Activated CD4-positive, alpha-beta T cell treated with anti-CD3 and anti-CD28 coated beads for 36 hours (primary cell): ENCODE measurements at regions of chr18 and their contacts with region 1.

Region 1: GRCh38 chr18:32018331-32019250 is at the start of gene RNF125:
- DNase-seq: peak; percentile 93
- ATAC-seq: peak; percentile 76
- H3K4me3 Mint-ChIP-seq: peak within 1 kb of the TSS; percentile 90
- H3K27ac Mint-ChIP-seq: peak within 1 kb of the TSS; percentile 94
- H3K4me1 Mint-ChIP-seq: peaks cover 42% of the 10 kb centered on the region
- H3K27me3 Mint-ChIP-seq: no peaks in the 10 kb centered on the region
- total RNA-seq, gene RNF125: 21.6 to 22.2 TPM

Region 2: GRCh38 chr18:31685097-31686082 is 333.2 kb before region 1 on chr18:
- CTCF ChIA-PET with region 1: no interaction called
- POLR2A ChIA-PET with region 1: no interaction called
- intact Hi-C with region 1: loop called in 1 of 2 experiments (anchors 5 kb)
- DNase-seq: peak; percentile 74
- ATAC-seq: peak; percentile 80
- H3K4me3 Mint-ChIP-seq: peak overlapping the region; percentile 73
- H3K27ac Mint-ChIP-seq: peak overlapping the region; percentile 78
- H3K4me1 Mint-ChIP-seq: peaks cover 16% of the 10 kb centered on the region
- H3K27me3 Mint-ChIP-seq: peaks cover 39% of the 10 kb centered on the region

Region 3: GRCh38 chr18:31850844-31851243 is 167.7 kb before region 1 on chr18:
- CTCF ChIA-PET with region 1: no interaction called
- POLR2A ChIA-PET with region 1: no interaction called
- intact Hi-C with region 1: no loop called
- DNase-seq: no peak
- ATAC-seq: no peak
- H3K4me3 Mint-ChIP-seq: no peak overlapping the region
- H3K27ac Mint-ChIP-seq: no peak overlapping the region
- H3K4me1 Mint-ChIP-seq: no peaks in the 10 kb centered on the region
- H3K27me3 Mint-ChIP-seq: no peaks in the 10 kb centered on the region

Region 4: GRCh38 chr18:31954349-31954748 is 64.2 kb before region 1 on chr18:
- CTCF ChIA-PET with region 1: no interaction called
- POLR2A ChIA-PET with region 1: no interaction called
- intact Hi-C with region 1: loop called in 1 of 2 experiments (anchors 5 kb)
- DNase-seq: no peak
- ATAC-seq: no peak
- H3K4me3 Mint-ChIP-seq: no peak overlapping the region
- H3K27ac Mint-ChIP-seq: no peak overlapping the region
- H3K4me1 Mint-ChIP-seq: peaks cover 2% of the 10 kb centered on the region
- H3K27me3 Mint-ChIP-seq: no peaks in the 10 kb centered on the region

Region 5: DNA sequence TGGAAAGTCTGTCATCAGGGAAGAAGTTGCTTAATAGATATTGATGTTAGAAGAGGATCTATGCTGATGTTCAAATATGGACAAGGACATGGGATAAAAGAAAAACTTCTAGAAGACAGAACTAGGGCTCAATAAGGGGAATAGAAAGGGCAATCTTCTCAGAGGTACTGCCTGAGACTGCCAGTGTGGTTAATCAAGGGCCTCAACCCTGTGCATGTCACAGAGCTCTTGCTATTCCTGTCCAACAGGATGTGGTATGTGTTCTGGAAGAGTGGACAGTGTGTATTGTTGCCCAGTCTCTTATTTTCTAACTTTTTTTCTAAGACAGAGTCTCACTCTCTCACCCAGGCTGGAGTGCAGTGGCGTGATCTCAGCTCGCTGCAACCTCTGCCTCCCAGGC is 27.8 kb before region 1 on chr18:
- CTCF ChIA-PET with region 1: no interaction called
- POLR2A ChIA-PET with region 1: no interaction called
- intact Hi-C with region 1: no loop called
- DNase-seq: no peak
- ATAC-seq: no peak
- H3K4me3 Mint-ChIP-seq: no peak overlapping the region
- H3K27ac Mint-ChIP-seq: no peak overlapping the region
- H3K4me1 Mint-ChIP-seq: no peaks in the 10 kb centered on the region
- H3K27me3 Mint-ChIP-seq: no peaks in the 10 kb centered on the region

Region 6: GRCh38 chr18:32048507-32049091 is 30.0 kb after region 1 on chr18:
- CTCF ChIA-PET with region 1: interaction called, 13 read pairs
- POLR2A ChIA-PET with region 1: interaction called, 8 read pairs
- intact Hi-C with region 1: loop called in 1 of 2 experiments (anchors 5 kb)
- DNase-seq: peak; percentile 52
- ATAC-seq: peak; percentile 62
- H3K4me3 Mint-ChIP-seq: no peak overlapping the region
- H3K27ac Mint-ChIP-seq: peak overlapping the region; percentile 84
- H3K4me1 Mint-ChIP-seq: peaks cover 42% of the 10 kb centered on the region
- H3K27me3 Mint-ChIP-seq: no peaks in the 10 kb centered on the region

Region 7: DNA sequence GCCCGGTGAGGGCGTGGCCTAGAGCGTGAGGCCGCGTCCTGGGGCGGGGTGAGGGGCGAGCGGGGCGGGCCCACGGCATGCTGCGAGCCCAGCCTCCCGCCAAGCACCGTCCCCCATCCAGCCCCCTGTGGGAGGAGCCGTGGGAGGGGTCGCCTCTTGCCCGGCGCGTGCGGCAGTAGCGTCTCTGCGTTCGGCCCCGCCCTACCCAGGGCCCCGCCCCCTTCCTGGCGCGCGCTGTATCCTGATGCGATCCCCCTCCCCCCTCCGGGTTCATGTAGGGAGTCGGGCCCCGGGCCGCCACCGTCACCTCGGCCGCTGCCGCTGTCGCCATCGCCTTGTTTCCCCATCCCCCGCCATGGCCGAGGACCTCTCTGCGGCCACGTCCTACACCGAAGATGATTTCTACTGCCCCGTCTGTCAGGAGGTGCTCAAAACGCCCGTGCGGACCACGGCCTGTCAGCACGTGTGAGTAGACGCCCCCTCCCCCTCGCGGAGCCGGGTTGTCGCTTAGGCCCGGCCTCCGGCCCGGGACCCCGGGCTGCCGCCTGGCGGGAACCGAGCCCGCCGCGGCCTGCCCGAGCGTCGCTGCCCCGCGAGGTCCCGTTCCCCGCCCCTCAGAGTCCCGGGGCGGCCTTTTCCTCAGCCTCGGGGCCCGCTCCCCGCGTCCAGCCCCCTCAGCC is 74.0 kb after region 1 on chr18:
- CTCF ChIA-PET with region 1: interaction called, 9 read pairs
- POLR2A ChIA-PET with region 1: interaction called, 17 read pairs
- intact Hi-C with region 1: loop called (anchors 1 kb)
- DNase-seq: peak; percentile 100
- ATAC-seq: peak; percentile 89
- H3K4me3 Mint-ChIP-seq: peak overlapping the region; percentile 93
- H3K27ac Mint-ChIP-seq: peak overlapping the region; percentile 97
- H3K4me1 Mint-ChIP-seq: peaks cover 41% of the 10 kb centered on the region
- H3K27me3 Mint-ChIP-seq: no peaks in the 10 kb centered on the region

Region 8: GRCh38 chr18:32200766-32201165 is 182.2 kb after region 1 on chr18:
- CTCF ChIA-PET with region 1: no interaction called
- POLR2A ChIA-PET with region 1: no interaction called
- intact Hi-C with region 1: no loop called
- DNase-seq: no peak
- ATAC-seq: no peak
- H3K4me3 Mint-ChIP-seq: no peak overlapping the region
- H3K27ac Mint-ChIP-seq: no peak overlapping the region
- H3K4me1 Mint-ChIP-seq: no peaks in the 10 kb centered on the region
- H3K27me3 Mint-ChIP-seq: peaks cover 3% of the 10 kb centered on the region